AG04449 (cell line): ENCODE measurements at regions of chr5 and their contacts with region 1.

Region 1: DNA sequence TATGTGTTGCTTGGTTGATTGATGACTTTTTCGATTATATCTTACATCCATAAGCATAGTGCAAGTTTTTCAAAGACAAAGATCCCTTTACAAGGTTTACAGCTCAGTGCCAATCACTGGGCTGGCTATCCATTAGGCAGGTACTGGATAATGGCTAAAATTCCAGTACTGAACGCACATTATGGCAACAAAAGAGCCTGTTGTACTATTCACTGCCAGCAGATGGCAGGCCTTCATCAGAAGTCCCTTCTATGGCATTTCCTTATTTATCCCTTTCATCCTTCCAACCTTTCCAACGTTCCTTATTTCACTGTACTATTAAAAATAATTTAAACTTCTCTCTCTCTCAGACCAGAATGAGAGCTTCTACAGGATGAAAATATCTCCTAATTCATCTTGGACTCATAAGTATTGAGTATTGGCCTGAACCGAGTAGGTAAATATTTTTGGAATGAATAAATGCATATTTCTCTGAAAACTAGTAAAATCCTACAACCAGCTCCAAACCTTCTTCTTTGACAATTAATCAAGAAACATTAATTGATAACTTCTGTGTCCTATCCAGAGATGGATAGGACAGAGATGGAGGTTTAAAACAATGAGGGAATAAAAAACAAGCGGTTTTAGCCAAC is 6.7 kb upstream of the WNT8A start:
- DNase-seq: peak; percentile 5
- H3K4me3 ChIP-seq: no peak overlapping the region
- CTCF ChIP-seq: peak; percentile 70

Region 2: GRCh38 chr5:137754126-137754960 is 322.8 kb before region 1 on chr5 and contains the start of gene HNRNPA0:
- CTCF ChIA-PET with region 1: no interaction called
- POLR2A ChIA-PET with region 1: no interaction called
- DNase-seq: peak; percentile 78
- H3K4me3 ChIP-seq: peak within 1 kb of the TSS; percentile 87
- CTCF ChIP-seq: no peak

Region 3: DNA sequence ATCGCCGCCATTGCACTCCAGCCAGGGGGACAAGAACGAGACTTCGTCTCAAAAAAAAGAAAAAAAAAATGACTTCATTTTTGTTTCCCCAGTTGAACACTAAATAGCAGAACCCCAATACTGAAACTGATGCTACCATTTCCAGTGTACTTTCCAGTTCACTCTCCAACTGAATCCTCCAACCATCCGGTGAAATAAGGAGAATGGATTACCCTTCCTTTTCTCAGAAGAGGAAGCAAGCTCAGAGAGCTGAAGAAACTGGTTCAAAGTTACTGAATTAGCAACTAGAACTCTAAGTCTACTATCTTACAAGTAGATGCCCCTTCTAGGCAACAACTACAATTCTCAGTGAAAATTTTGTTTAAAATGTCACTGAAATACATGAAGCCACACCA is 48.2 kb before region 1 on chr5:
- CTCF ChIA-PET with region 1: interaction called, 75 read pairs
- POLR2A ChIA-PET with region 1: no interaction called
- DNase-seq: no peak
- H3K4me3 ChIP-seq: no peak overlapping the region
- CTCF ChIP-seq: no peak

Region 4: DNA sequence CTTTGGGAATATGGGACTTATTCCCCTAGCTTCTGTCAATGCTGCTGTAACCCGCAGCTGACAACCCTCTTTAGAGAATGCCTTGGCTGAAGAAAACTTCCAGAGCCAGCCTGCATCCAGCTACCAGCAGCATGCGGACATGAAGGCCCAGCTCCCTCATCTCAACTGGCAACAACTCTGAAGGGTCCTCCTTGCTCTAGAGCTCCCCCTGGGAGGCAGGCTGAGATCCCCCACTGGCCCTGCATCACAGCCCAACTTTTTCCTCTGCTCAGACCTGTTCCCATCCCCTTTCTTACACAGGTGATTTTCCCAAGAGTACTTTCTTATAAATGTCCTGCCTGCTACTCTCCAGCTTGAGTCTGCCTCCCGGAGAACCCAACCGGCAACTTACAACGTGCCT is 12.1 kb before region 1 on chr5:
- CTCF ChIA-PET with region 1: interaction called, 41 read pairs
- POLR2A ChIA-PET with region 1: no interaction called
- DNase-seq: no peak
- H3K4me3 ChIP-seq: no peak overlapping the region
- CTCF ChIP-seq: peak; percentile 22

Region 5: GRCh38 chr5:138102454-138103318 is 25.5 kb after region 1 on chr5:
- CTCF ChIA-PET with region 1: interaction called, 22 read pairs
- POLR2A ChIA-PET with region 1: no interaction called
- DNase-seq: no peak
- H3K4me3 ChIP-seq: no peak overlapping the region
- CTCF ChIP-seq: no peak

Region 6: GRCh38 chr5:138128334-138128733 is 51.2 kb after region 1 on chr5:
- CTCF ChIA-PET with region 1: interaction called, 229 read pairs
- POLR2A ChIA-PET with region 1: no interaction called
- DNase-seq: no peak
- H3K4me3 ChIP-seq: no peak overlapping the region
- CTCF ChIP-seq: no peak

Region 7: GRCh38 chr5:138148811-138149210 is 71.6 kb after region 1 on chr5:
- CTCF ChIA-PET with region 1: interaction called, 26 read pairs
- POLR2A ChIA-PET with region 1: no interaction called
- DNase-seq: no peak
- H3K4me3 ChIP-seq: no peak overlapping the region
- CTCF ChIP-seq: no peak